ENCODE measurements at regions of chr11 and their contacts with region 1.

Region 1: GRCh38 chr11:45110562-45110961 is 35.9 kb upstream of the PRDM11 start:
- DNase-seq: peak in 5 of 9 experiments; percentile 35 to 80 (median 59)
- ATAC-seq: peak; percentile 73
- H3K4me3 ChIP-seq: no peak overlapping the region
- H3K4me3 Mint-ChIP-seq: no peak overlapping the region
- H3K27ac ChIP-seq: no peak overlapping the region
- H3K27ac Mint-ChIP-seq: no peak overlapping the region
- H3K4me1 ChIP-seq: no peaks in the 10 kb centered on the region
- H3K4me1 Mint-ChIP-seq: no peaks in the 10 kb centered on the region
- H3K27me3 ChIP-seq: no peaks in the 10 kb centered on the region
- H3K27me3 Mint-ChIP-seq: peaks cover 45% of the 10 kb centered on the region
- CTCF ChIP-seq: peak; percentile 75

Region 2: GRCh38 chr11:44470854-44471253 is 639.7 kb before region 1 on chr11:
- CTCF ChIA-PET with region 1: no interaction called
- POLR2A ChIA-PET with region 1: no interaction called
- intact Hi-C with region 1: no loop called
- DNase-seq: no peak
- ATAC-seq: no peak
- H3K4me3 ChIP-seq: no peak overlapping the region
- H3K4me3 Mint-ChIP-seq: no peak overlapping the region
- H3K27ac ChIP-seq: no peak overlapping the region
- H3K27ac Mint-ChIP-seq: no peak overlapping the region
- H3K4me1 ChIP-seq: no peaks in the 10 kb centered on the region
- H3K4me1 Mint-ChIP-seq: no peaks in the 10 kb centered on the region
- H3K27me3 ChIP-seq: no peaks in the 10 kb centered on the region
- H3K27me3 Mint-ChIP-seq: peaks cover 36% of the 10 kb centered on the region
- CTCF ChIP-seq: no peak

Region 3: DNA sequence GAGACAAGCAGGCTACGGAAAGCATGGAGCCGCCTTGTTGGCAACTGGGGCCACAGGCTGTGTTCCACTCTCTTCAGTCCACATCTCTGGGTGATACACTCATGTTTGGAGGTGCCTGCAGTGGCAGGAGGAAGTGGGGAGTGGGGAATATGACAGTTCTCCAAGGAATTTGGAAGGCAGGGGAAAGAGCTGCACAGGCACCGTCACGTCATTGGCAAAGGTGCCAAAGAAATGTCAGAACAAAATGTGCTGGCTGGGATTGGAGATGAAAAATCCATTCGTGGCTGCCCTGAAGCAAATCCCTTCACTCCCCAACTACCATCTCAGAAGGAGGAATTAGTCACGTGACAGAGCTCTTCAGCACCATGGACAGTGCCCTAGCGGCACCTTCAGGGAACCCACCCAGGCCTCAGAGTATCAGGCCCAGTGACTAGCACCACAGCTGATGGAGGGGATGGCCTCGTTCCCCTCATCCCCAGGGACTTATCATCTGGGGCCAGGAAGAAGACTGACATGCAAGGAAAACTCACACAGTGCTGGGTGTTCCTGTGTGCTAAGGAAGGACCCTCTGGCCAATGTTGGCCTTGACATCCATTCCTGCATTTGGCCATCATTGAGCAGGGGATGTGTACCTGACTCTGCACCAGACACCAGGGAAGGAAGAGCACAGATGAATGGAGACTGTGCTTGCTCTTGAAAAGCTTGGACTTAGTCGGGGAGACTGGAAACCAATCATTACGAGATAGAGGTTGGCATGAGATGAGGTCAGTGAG is 12.7 kb before region 1 on chr11:
- CTCF ChIA-PET with region 1: interaction called, 41 read pairs
- POLR2A ChIA-PET with region 1: no interaction called
- intact Hi-C with region 1: no loop called
- DNase-seq: peak in 5 of 9 experiments; percentile 37 to 66 (median 53)
- ATAC-seq: no peak
- H3K4me3 ChIP-seq: no peak overlapping the region
- H3K4me3 Mint-ChIP-seq: no peak overlapping the region
- H3K27ac ChIP-seq: no peak overlapping the region
- H3K27ac Mint-ChIP-seq: no peak overlapping the region
- H3K4me1 ChIP-seq: peaks cover 20% of the 10 kb centered on the region
- H3K4me1 Mint-ChIP-seq: peaks cover 20% of the 10 kb centered on the region
- H3K27me3 ChIP-seq: no peaks in the 10 kb centered on the region
- H3K27me3 Mint-ChIP-seq: peaks cover 9% of the 10 kb centered on the region
- CTCF ChIP-seq: no peak

Region 4: DNA sequence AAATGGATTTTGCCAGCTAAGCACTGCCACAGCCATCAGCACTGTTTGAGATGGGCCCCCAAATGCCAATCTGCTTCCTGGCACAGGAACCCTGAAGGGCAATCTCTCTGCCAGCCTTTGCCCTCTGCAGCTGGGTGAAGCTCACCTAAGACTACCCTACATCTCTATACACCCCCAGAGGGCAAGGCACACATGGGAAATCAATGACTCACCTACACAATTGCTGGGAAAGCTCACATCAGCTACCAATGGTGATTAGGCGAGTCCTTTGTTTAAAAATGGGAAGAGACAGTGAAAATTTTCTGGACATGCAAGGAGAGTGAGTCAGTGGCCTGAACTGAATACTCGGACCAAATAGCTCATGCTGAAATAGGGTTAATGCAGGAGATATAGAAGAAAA is 23.3 kb after region 1 on chr11:
- CTCF ChIA-PET with region 1: interaction called, 10 read pairs
- POLR2A ChIA-PET with region 1: no interaction called
- intact Hi-C with region 1: no loop called
- DNase-seq: no peak
- ATAC-seq: no peak
- H3K4me3 ChIP-seq: no peak overlapping the region
- H3K4me3 Mint-ChIP-seq: no peak overlapping the region
- H3K27ac ChIP-seq: no peak overlapping the region
- H3K27ac Mint-ChIP-seq: no peak overlapping the region
- H3K4me1 ChIP-seq: no peaks in the 10 kb centered on the region
- H3K4me1 Mint-ChIP-seq: no peaks in the 10 kb centered on the region
- H3K27me3 ChIP-seq: peaks cover 0 to 4% of the 10 kb centered on the region in 2 experiments
- H3K27me3 Mint-ChIP-seq: peaks cover 41% of the 10 kb centered on the region
- CTCF ChIP-seq: no peak

Region 5: DNA sequence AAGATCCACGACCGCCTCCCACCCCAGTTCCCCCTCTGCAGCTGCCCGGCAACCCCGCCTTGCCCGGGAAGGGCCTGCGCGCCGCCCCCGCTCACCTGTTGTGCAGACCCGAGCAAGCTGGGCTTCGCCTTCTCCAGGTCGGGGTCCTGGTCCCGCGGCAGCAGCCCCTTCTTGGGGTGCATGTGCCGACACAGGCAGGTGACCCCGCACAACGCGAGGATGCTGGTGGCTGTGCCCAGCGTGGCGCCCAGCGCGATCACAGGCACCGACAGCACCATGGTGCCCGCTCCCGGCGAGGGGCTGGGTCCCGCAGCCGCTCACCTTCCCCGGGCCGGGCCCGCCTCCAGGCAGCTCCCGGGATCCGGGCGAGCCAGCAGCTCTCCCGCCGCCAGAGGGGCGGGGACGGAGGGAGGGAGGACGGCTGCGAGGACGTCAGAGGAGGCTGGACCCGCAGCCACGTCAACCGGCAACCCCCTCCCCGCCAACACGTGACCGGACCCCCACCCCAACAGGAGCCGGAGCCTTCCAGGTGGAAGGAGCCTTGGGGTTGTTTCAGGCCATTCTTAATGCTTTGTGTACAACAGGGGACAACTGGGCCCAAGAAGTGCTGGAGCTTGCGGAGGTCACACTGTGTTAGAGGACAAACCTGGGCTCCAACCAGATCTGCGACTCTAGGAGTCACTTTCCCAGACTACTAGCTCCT is 175.5 kb after region 1 on chr11 and contains the start of gene SYT13:
- CTCF ChIA-PET with region 1: interaction called, 48 read pairs
- POLR2A ChIA-PET with region 1: no interaction called
- intact Hi-C with region 1: no loop called
- DNase-seq: no peak
- ATAC-seq: no peak
- H3K4me3 ChIP-seq: no peak within 1 kb of the TSS
- H3K4me3 Mint-ChIP-seq: no peak within 1 kb of the TSS
- H3K27ac ChIP-seq: no peak within 1 kb of the TSS
- H3K27ac Mint-ChIP-seq: no peak within 1 kb of the TSS
- H3K4me1 ChIP-seq: no peaks in the 10 kb centered on the region
- H3K4me1 Mint-ChIP-seq: peaks cover 3% of the 10 kb centered on the region
- H3K27me3 ChIP-seq: peaks cover 0 to 9% of the 10 kb centered on the region in 2 experiments
- H3K27me3 Mint-ChIP-seq: peaks cover 51% of the 10 kb centered on the region
- CTCF ChIP-seq: no peak
- total RNA-seq, gene SYT13: not detected

Region 6: GRCh38 chr11:45294499-45294898 is 183.9 kb after region 1 on chr11:
- CTCF ChIA-PET with region 1: interaction called, 48 read pairs
- POLR2A ChIA-PET with region 1: no interaction called
- intact Hi-C with region 1: loop called in 1 of 2 experiments (anchors 1 kb)
- DNase-seq: no peak
- ATAC-seq: no peak
- H3K4me3 ChIP-seq: no peak overlapping the region
- H3K4me3 Mint-ChIP-seq: no peak overlapping the region
- H3K27ac ChIP-seq: no peak overlapping the region
- H3K27ac Mint-ChIP-seq: no peak overlapping the region
- H3K4me1 ChIP-seq: no peaks in the 10 kb centered on the region
- H3K4me1 Mint-ChIP-seq: no peaks in the 10 kb centered on the region
- H3K27me3 ChIP-seq: peaks cover 2 to 3% of the 10 kb centered on the region in 2 experiments
- H3K27me3 Mint-ChIP-seq: peaks cover 38% of the 10 kb centered on the region
- CTCF ChIP-seq: no peak

Region 7: DNA sequence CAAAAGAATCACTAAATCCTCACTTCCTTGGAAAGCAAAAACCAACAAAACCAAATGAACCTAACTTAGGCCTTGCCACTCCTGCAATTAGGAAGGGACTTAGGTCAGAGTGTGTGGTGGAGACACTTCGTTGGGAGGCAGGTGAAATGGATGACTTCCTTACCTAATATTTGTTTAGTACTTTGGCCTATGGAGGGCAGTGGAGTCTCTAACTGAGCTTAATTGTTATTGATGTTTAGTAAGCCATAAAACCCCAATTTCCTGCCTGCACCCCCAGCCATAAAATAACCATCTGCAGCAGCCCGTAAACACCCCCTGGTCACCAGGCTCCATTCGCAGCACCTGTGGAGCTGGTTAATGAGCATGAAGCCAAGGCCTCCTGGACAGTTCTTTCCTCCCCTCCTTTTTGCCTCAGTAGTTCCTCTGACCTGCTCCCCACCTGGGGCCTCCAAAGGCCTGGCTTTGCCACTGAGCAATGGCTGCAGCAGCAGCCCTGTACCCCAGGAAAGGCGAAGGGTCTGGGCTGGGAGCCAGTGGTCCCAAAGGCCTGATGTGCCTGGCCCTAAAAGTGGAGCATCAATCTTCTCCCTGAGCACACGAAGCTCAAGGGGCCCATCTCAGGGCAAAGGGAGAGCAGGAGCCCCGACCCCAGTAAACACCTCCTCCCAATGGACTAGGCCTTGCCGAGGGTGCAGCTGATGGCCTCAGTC is 191.1 kb after region 1 on chr11:
- CTCF ChIA-PET with region 1: interaction called, 15 read pairs
- POLR2A ChIA-PET with region 1: no interaction called
- intact Hi-C with region 1: no loop called
- DNase-seq: no peak
- ATAC-seq: no peak
- H3K4me3 ChIP-seq: no peak overlapping the region
- H3K4me3 Mint-ChIP-seq: no peak overlapping the region
- H3K27ac ChIP-seq: no peak overlapping the region
- H3K27ac Mint-ChIP-seq: no peak overlapping the region
- H3K4me1 ChIP-seq: no peaks in the 10 kb centered on the region
- H3K4me1 Mint-ChIP-seq: no peaks in the 10 kb centered on the region
- H3K27me3 ChIP-seq: no peaks in the 10 kb centered on the region
- H3K27me3 Mint-ChIP-seq: peaks cover 19% of the 10 kb centered on the region
- CTCF ChIP-seq: no peak

Region 8: DNA sequence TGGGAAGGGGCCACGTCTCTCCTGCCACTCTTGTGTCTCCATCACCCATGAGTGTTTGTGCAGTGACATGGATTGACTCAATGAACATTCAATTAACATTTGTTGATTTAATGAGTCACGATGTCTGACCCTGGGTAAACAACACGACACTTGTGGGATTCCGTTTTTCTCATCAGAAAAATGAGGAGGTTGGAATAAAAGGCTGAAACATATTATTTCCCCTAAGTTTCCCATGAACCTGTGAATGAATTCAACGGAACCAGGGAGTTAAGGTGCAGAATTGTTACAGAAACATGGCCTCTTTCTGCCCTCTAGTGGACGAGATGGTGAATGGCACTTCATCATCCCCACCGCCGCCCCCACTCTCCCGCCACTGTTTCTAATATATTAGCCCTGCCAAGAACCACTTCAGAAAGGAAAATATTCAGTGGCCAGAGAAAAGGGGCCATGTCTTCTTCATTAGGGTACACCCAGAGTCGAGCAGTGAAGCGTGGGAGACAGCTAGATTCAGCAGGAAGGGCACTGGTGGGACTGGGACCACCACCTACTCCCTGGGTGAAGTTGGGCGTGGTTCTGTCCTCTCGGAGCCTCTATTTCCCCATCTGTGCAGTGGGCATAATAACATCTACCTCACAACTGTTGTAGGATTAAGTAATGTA is 221.8 kb after region 1 on chr11:
- CTCF ChIA-PET with region 1: interaction called, 425 read pairs
- POLR2A ChIA-PET with region 1: no interaction called
- intact Hi-C with region 1: loop called (anchors 1 kb)
- DNase-seq: peak in 6 of 9 experiments; percentile 23 to 63 (median 51)
- ATAC-seq: peak; percentile 51
- H3K4me3 ChIP-seq: no peak overlapping the region
- H3K4me3 Mint-ChIP-seq: no peak overlapping the region
- H3K27ac ChIP-seq: no peak overlapping the region
- H3K27ac Mint-ChIP-seq: no peak overlapping the region
- H3K4me1 ChIP-seq: no peaks in the 10 kb centered on the region
- H3K4me1 Mint-ChIP-seq: no peaks in the 10 kb centered on the region
- H3K27me3 ChIP-seq: no peaks in the 10 kb centered on the region
- H3K27me3 Mint-ChIP-seq: peaks cover 23% of the 10 kb centered on the region
- CTCF ChIP-seq: peak; percentile 93

Measured in CD8-positive, alpha-beta T cell (primary cell).